Spleen (tissue), 13 donors: ENCODE measurements at regions of chr7 and their contacts with region 1.

Region 1: GRCh38 chr7:77326696-77327628 is 89.2 kb downstream of the GSAP start:
- DNase-seq: no peak
- H3K4me3 ChIP-seq: no peak overlapping the region
- H3K27ac ChIP-seq: peak overlapping the region in 5 of 8 donors; percentile 16 to 56 (median 46)
- H3K4me1 ChIP-seq: peaks cover 24 to 60% (median 51%) of the 10 kb centered on the region in 6 donors
- H3K27me3 ChIP-seq: no peaks in the 10 kb centered on the region
- CTCF ChIP-seq: no peak
- POLR2A ChIP-seq: no peak

Region 2: GRCh38 chr7:77157446-77157845 is 169.5 kb before region 1 on chr7:
- intact Hi-C with region 1: no loop called
- DNase-seq: no peak
- H3K4me3 ChIP-seq: no peak overlapping the region
- H3K27ac ChIP-seq: peak overlapping the region in 6 of 8 donors; percentile 15 to 85 (median 56)
- H3K4me1 ChIP-seq: peaks cover 0 to 22% (median 6%) of the 10 kb centered on the region in 6 donors
- H3K27me3 ChIP-seq: no peaks in the 10 kb centered on the region
- CTCF ChIP-seq: no peak
- POLR2A ChIP-seq: no peak

Region 3: DNA sequence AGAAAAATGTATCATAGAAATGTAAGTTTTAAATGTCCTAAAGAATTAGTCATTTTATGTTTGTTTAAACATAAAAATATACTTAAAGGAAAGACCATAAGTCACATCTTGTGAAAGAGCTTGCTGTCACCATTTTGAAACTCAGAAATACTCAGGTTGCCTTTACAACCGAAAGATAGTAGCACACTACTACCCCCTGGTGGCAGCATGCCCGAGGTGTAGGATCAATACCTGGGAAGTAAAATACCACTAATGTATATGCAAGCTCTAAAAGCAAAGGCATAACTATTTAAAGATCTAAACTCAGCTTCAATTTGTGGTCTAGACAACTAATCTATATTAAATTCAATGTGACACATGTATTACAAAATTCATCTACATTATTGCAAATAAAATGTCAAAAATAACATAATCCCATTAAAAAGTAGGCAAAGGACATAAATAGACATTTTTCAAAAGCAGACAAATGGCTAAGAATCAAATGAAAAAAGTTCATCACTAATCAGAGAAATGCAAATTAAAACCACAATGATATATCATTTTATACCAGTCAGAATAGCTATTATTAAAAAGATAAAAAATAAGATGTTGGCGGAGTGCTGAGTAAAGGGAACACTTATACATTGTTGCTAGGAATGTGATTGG is 79.6 kb before region 1 on chr7:
- intact Hi-C with region 1: loop called (anchors 5 kb)
- DNase-seq: peak; percentile 90
- H3K4me3 ChIP-seq: no peak overlapping the region
- H3K27ac ChIP-seq: peak overlapping the region in 1 of 8 donors; percentile 22
- H3K4me1 ChIP-seq: peaks cover 0 to 25% (median 14%) of the 10 kb centered on the region in 6 donors
- H3K27me3 ChIP-seq: no peaks in the 10 kb centered on the region
- CTCF ChIP-seq: peak; percentile 76 to 92 (median 88)
- POLR2A ChIP-seq: no peak

Region 4: GRCh38 chr7:77415823-77416622 is 89.1 kb after region 1 on chr7 and contains the start of gene GSAP:
- intact Hi-C with region 1: no loop called
- DNase-seq: peak; percentile 94
- H3K4me3 ChIP-seq: peak within 1 kb of the TSS; percentile 64 to 87 (median 69)
- H3K27ac ChIP-seq: peak within 1 kb of the TSS; percentile 90 to 98 (median 96)
- H3K4me1 ChIP-seq: peaks cover 9 to 80% (median 49%) of the 10 kb centered on the region in 6 donors
- H3K27me3 ChIP-seq: no peaks in the 10 kb centered on the region
- CTCF ChIP-seq: peak in 4 of 11 experiments; percentile 25 to 46 (median 36)
- POLR2A ChIP-seq: peak in 1 of 3 donors; percentile 9
- total RNA-seq, gene GSAP: 54.5 to 96.5 (median 86.2) TPM